ENCODE measurements at regions of chr15 and their contacts with region 1.

Region 1: GRCh38 chr15:50278496-50278895 is 13.0 kb upstream of the HDC start:
- DNase-seq: no peak
- ATAC-seq: no peak
- H3K4me3 ChIP-seq: no peak overlapping the region
- H3K27ac ChIP-seq: no peak overlapping the region
- H3K4me1 ChIP-seq: no peaks in the 10 kb centered on the region
- H3K27me3 ChIP-seq: no peaks in the 10 kb centered on the region
- CTCF ChIP-seq: no peak
- POLR2A ChIP-seq: no peak
- RAD21 ChIP-seq: no peak

Region 2: GRCh38 chr15:50044406-50044805 is 234.1 kb before region 1 on chr15:
- CTCF ChIA-PET with region 1: no interaction called
- POLR2A ChIA-PET with region 1: no interaction called
- dilution Hi-C with region 1: no loop called
- in situ Hi-C with region 1: no loop called
- intact Hi-C with region 1: no loop called
- DNase-seq: no peak
- ATAC-seq: no peak
- H3K4me3 ChIP-seq: no peak overlapping the region
- H3K27ac ChIP-seq: no peak overlapping the region
- H3K4me1 ChIP-seq: peaks cover 5% of the 10 kb centered on the region
- H3K27me3 ChIP-seq: no peaks in the 10 kb centered on the region
- CTCF ChIP-seq: no peak
- POLR2A ChIP-seq: no peak
- RAD21 ChIP-seq: no peak

Region 3: GRCh38 chr15:50234771-50235170 is 43.7 kb before region 1 on chr15:
- CTCF ChIA-PET with region 1: interaction called, 3 read pairs
- POLR2A ChIA-PET with region 1: no interaction called
- dilution Hi-C with region 1: no loop called
- in situ Hi-C with region 1: no loop called
- intact Hi-C with region 1: loop called (anchors 1 kb)
- DNase-seq: no peak
- ATAC-seq: no peak
- H3K4me3 ChIP-seq: no peak overlapping the region
- H3K27ac ChIP-seq: no peak overlapping the region
- H3K4me1 ChIP-seq: no peaks in the 10 kb centered on the region
- H3K27me3 ChIP-seq: no peaks in the 10 kb centered on the region
- CTCF ChIP-seq: no peak
- POLR2A ChIP-seq: no peak
- RAD21 ChIP-seq: no peak

Measured in IMR-90 (cell line).